HEK293 (cell line): ENCODE measurements at regions of chr11 and their contacts with region 1.

Region 1: GRCh38 chr11:119323538-119324033 is 6.7 kb upstream of the MCAM start:
- H3K4me3 ChIP-seq: no peak overlapping the region
- H3K27ac ChIP-seq: no peak overlapping the region
- H3K4me1 ChIP-seq: no peaks in the 10 kb centered on the region; the same call in 1 of the 2 replicates
- CTCF ChIP-seq: peak; percentile 44; the same call in 1 of the 2 replicates

Region 2: DNA sequence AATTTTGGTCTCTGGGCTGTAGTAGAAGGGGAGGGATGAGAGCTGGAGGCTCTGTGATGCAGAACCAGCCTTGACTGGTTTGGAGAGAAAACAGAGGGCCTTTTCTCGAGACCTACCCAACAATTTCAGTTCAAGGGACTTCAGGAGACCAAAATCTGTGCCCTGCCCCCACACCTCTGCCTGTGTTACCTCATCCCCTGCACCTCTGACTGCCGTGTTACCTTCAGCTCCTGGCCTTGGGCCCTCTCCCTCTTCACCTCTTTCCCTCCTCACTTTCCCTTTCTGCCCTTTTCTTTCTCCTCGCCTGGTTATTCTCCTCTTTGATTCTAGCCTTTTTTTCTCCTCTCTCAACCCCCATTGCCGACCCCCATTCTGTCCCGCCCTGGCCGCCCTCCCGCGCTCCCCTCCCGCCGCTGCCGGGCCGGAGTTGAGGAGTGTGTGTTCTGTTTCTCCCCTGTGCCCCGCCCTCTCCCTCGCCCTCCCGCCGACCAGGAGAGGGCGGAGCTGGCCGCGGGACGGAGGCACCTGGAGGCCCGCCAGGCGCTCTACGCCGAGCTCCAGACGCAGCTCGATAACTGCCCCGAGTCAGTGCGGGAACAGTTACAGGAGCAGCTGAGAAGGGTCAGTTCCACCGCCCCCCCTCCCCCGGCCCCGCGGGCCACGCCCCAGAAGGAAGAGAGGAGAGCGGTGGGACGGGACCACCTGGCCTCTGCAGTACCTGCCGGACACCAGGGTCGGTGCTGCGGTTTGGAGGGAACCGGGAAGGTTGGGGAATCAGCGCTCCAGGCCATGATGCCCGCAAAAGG is 689.0 kb before region 1 on chr11:
- CTCF ChIA-PET with region 1: no interaction called
- POLR2A ChIA-PET with region 1: no interaction called
- H3K4me3 ChIP-seq: 0 out of 2 replicates have a peak overlapping the region, but pooled peaks have one; percentile 1
- H3K27ac ChIP-seq: no peak overlapping the region
- H3K4me1 ChIP-seq: peaks cover 7% of the 10 kb centered on the region; the same call in 1 of the 2 replicates
- CTCF ChIP-seq: peak; percentile 29

Region 3: DNA sequence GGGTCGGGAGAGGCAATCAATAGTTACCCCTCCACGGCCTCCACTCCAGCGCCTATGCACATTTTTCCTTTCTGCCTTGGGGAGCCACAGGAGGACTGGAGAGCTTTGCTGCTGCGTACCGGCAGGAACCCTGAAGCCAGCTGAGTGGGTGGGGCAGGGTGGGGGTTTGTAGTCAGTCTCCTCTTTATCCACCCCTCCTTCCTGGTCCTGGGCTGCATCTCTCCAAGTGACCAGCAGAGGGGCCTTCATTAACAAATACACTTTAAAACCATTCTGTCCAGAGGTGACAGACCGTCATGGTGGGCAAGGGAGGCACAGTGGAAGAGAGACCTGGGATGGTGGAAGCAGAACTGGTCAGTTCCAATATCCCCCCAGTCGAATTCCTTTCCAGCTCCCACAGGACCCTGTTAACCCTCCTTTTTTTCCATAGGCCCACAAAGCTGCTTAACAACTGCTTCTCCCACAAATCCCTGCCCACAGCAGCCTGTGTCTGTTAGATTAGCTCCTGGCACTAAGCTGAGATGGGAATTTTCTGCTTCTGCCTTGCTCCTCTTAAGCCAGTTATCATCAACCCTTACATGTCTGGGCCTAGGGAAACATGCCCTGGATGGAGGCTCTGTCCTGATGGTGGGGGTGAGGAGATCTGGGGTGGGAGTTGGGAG is 178.6 kb before region 1 on chr11:
- CTCF ChIA-PET with region 1: interaction called, 10 read pairs
- POLR2A ChIA-PET with region 1: no interaction called
- H3K4me3 ChIP-seq: no peak overlapping the region
- H3K27ac ChIP-seq: no peak overlapping the region
- H3K4me1 ChIP-seq: no peaks in the 10 kb centered on the region
- CTCF ChIP-seq: no peak; the same call in 1 of the 2 replicates

Region 4: GRCh38 chr11:119205574-119206510 is 117.7 kb before region 1 on chr11 and contains the start of gene CBL:
- CTCF ChIA-PET with region 1: interaction called, 26 read pairs
- POLR2A ChIA-PET with region 1: no interaction called
- H3K4me3 ChIP-seq: peak within 1 kb of the TSS; percentile 68
- H3K27ac ChIP-seq: peak within 1 kb of the TSS; percentile 87
- H3K4me1 ChIP-seq: peaks cover 10% of the 10 kb centered on the region; the same call in 1 of the 2 replicates
- CTCF ChIP-seq: peak; percentile 73

Region 5: GRCh38 chr11:119306373-119306890 is 17.2 kb before region 1 on chr11:
- CTCF ChIA-PET with region 1: interaction called, 16 read pairs
- POLR2A ChIA-PET with region 1: interaction called, 35 read pairs
- H3K4me3 ChIP-seq: no peak overlapping the region
- H3K27ac ChIP-seq: no peak overlapping the region
- H3K4me1 ChIP-seq: no peaks in the 10 kb centered on the region
- CTCF ChIP-seq: no peak

Region 6: DNA sequence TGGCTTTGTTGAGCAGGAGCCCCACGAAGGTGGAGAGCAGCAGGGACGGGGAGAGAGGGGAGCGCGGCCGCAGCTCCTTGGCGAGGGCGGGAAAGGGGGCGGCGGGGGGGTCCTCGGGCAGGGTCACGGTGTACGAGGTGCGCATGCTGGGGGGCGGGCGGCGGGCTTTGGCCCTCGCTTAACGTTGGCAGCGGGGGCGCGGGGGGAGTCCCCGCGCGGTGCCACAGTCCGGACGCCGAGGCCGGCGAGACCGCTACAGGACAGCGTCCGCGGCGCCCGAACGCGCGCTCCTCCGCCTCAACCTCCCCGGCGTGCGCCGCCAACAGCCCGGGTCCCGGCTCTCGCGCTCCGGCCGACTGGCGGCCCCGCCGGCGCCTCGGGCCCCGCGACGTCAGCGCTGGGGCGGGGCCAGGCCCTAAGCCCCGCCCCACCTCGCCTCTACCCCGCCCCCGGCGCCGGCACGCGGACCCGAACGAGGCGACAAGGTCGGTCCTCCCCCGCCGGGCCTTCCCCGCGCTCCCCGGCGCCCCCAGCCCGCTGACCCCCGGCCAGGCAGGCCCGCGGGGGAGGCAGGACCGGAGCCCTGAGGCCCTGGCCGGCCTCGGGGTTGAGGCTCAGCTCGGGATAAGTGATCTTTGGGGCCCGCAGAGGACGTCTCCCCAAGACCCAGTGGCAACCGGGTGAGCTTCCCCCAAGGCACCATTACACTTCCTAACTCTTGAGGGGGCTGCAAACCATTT is 40.4 kb after region 1 on chr11:
- CTCF ChIA-PET with region 1: interaction called, 11 read pairs
- POLR2A ChIA-PET with region 1: interaction called, 4 read pairs
- H3K4me3 ChIP-seq: peak overlapping the region; percentile 32
- H3K27ac ChIP-seq: no peak overlapping the region; the same call in 1 of the 2 replicates
- H3K4me1 ChIP-seq: peaks cover 9% of the 10 kb centered on the region
- CTCF ChIP-seq: no peak

Region 7: GRCh38 chr11:119381181-119381988 is 57.8 kb after region 1 on chr11 and contains the start of gene USP2:
- CTCF ChIA-PET with region 1: interaction called, 38 read pairs
- POLR2A ChIA-PET with region 1: interaction called, 4 read pairs
- H3K4me3 ChIP-seq: peak within 1 kb of the TSS; percentile 45
- H3K27ac ChIP-seq: no peak within 1 kb of the TSS
- H3K4me1 ChIP-seq: no peaks in the 10 kb centered on the region; the same call in 1 of the 2 replicates
- CTCF ChIP-seq: peak; percentile 95